CD4-positive, alpha-beta T cell (primary cell): ENCODE measurements at regions of chr3 and their contacts with region 1.

Region 1: GRCh38 chr3:121545574-121546455 is at the start of gene POLQ:
- DNase-seq: peak; percentile 76 to 94 (median 84)
- ATAC-seq: peak; percentile 99
- H3K4me3 ChIP-seq: peak within 1 kb of the TSS; percentile 66
- H3K4me3 Mint-ChIP-seq: peak within 1 kb of the TSS; percentile 85
- H3K27ac ChIP-seq: peak within 1 kb of the TSS; percentile 49 to 59
- H3K27ac Mint-ChIP-seq: peak within 1 kb of the TSS; percentile 82
- H3K4me1 ChIP-seq: peaks cover 8% of the 10 kb centered on the region
- H3K4me1 Mint-ChIP-seq: peaks cover 14% of the 10 kb centered on the region
- H3K27me3 ChIP-seq: no peaks in the 10 kb centered on the region
- H3K27me3 Mint-ChIP-seq: no peaks in the 10 kb centered on the region
- CTCF ChIP-seq: no peak
- total RNA-seq, gene POLQ: 0.17 to 0.30 TPM

Region 2: DNA sequence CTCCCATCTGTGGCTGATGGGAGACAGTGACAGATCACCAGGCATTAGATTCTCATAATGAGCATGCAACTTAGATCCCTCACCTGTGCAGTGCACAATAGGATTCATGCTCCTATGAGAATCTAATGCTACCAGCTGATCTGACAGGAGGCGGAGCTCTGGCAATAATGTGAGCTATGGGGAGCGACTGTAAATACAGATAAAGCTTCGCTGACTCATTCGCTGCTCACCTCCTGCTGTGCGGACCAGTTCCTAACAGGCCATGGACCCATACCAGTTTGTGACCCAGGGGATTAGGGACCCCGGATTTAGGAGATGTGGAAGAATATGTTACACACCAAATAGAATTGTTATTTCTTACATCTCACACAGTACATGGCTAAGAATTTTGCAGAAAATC is 28.6 kb after region 1 on chr3:
- CTCF ChIA-PET with region 1: no interaction called
- POLR2A ChIA-PET with region 1: no interaction called
- intact Hi-C with region 1: no loop called
- DNase-seq: no peak
- ATAC-seq: no peak
- H3K4me3 ChIP-seq: no peak overlapping the region
- H3K4me3 Mint-ChIP-seq: no peak overlapping the region
- H3K27ac ChIP-seq: no peak overlapping the region
- H3K27ac Mint-ChIP-seq: no peak overlapping the region
- H3K4me1 ChIP-seq: no peaks in the 10 kb centered on the region
- H3K4me1 Mint-ChIP-seq: no peaks in the 10 kb centered on the region
- H3K27me3 ChIP-seq: no peaks in the 10 kb centered on the region
- H3K27me3 Mint-ChIP-seq: no peaks in the 10 kb centered on the region
- CTCF ChIP-seq: no peak

Region 3: DNA sequence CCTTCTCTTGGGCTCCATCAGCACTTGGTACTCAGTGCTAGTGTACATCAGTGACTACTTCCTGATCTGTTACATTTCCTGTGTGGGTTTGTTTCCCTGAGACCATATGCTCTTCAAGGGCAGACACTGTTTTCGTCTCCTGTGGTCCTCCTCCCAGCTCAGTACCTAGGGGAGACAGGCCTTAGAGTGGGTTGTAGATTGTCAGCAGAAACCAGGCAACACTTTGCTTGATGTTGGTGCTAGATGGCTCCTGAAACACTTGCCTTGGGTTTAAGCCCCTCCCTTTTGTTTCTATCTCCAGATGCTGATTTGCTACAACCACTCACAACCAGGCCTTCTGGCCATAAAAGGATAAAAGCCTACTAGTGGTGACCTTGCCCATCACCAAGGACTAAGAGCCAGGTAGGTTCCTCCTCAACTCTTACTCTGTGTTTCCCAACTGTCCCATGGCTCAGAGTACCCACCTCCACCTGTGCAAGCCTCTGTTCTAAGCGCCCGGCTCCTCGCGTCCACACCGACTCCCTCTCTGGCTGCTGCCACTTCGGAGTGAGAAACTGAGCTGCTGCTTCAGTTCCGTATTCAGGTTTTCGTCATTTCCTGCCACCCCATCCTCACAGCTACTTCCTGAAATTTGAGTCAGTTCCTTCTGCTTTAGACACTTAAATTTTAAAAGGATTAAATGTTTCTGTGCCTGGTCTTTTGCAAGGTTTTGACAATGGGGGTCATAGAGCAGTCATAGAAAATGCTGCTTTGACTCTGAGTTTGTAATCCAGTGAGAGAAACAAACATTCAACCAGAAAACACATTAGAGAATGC is 114.7 kb after region 1 on chr3 and contains the start of gene HCLS1:
- CTCF ChIA-PET with region 1: interaction called, 3 read pairs
- POLR2A ChIA-PET with region 1: interaction called, 10 read pairs
- intact Hi-C with region 1: loop called (anchors 5 to 10 kb)
- DNase-seq: peak; percentile 46 to 89 (median 62)
- ATAC-seq: peak; percentile 83
- H3K4me3 ChIP-seq: peak within 1 kb of the TSS; percentile 61
- H3K4me3 Mint-ChIP-seq: peak within 1 kb of the TSS; percentile 94
- H3K27ac ChIP-seq: peak within 1 kb of the TSS; percentile 83 to 97
- H3K27ac Mint-ChIP-seq: peak within 1 kb of the TSS; percentile 96
- H3K4me1 ChIP-seq: peaks cover 48% of the 10 kb centered on the region
- H3K4me1 Mint-ChIP-seq: peaks cover 55% of the 10 kb centered on the region
- H3K27me3 ChIP-seq: no peaks in the 10 kb centered on the region
- H3K27me3 Mint-ChIP-seq: no peaks in the 10 kb centered on the region
- CTCF ChIP-seq: no peak
- total RNA-seq, gene HCLS1: 204 to 206 TPM

Region 4: GRCh38 chr3:122094705-122095104 is 548.9 kb after region 1 on chr3:
- CTCF ChIA-PET with region 1: no interaction called
- POLR2A ChIA-PET with region 1: no interaction called
- intact Hi-C with region 1: loop called in 1 of 2 experiments (anchors 5 kb)
- DNase-seq: no peak
- ATAC-seq: no peak
- H3K4me3 ChIP-seq: no peak overlapping the region
- H3K4me3 Mint-ChIP-seq: no peak overlapping the region
- H3K27ac ChIP-seq: no peak overlapping the region
- H3K27ac Mint-ChIP-seq: no peak overlapping the region
- H3K4me1 ChIP-seq: peaks cover 6% of the 10 kb centered on the region
- H3K4me1 Mint-ChIP-seq: no peaks in the 10 kb centered on the region
- H3K27me3 ChIP-seq: no peaks in the 10 kb centered on the region
- H3K27me3 Mint-ChIP-seq: no peaks in the 10 kb centered on the region
- CTCF ChIP-seq: no peak

Region 5: GRCh38 chr3:122383771-122384697 is 838.2 kb after region 1 on chr3 and contains the start of gene FAM162A:
- CTCF ChIA-PET with region 1: interaction called, 7 read pairs
- POLR2A ChIA-PET with region 1: interaction called, 6 read pairs
- intact Hi-C with region 1: loop called (anchors 1 to 5 kb)
- DNase-seq: peak; percentile 87 to 98 (median 92)
- ATAC-seq: peak; percentile 94
- H3K4me3 ChIP-seq: peak within 1 kb of the TSS; percentile 76
- H3K4me3 Mint-ChIP-seq: peak within 1 kb of the TSS; percentile 94
- H3K27ac ChIP-seq: peak within 1 kb of the TSS; percentile 61 to 71
- H3K27ac Mint-ChIP-seq: peak within 1 kb of the TSS; percentile 87
- H3K4me1 ChIP-seq: peaks cover 17% of the 10 kb centered on the region
- H3K4me1 Mint-ChIP-seq: peaks cover 54% of the 10 kb centered on the region
- H3K27me3 ChIP-seq: no peaks in the 10 kb centered on the region
- H3K27me3 Mint-ChIP-seq: no peaks in the 10 kb centered on the region
- CTCF ChIP-seq: peak; percentile 71
- total RNA-seq, gene FAM162A: 32.8 to 34.6 TPM

Region 6: GRCh38 chr3:123028233-123028828 is 1482.5 kb after region 1 on chr3:
- CTCF ChIA-PET with region 1: no interaction called
- POLR2A ChIA-PET with region 1: no interaction called
- intact Hi-C with region 1: loop called (anchors 2 to 5 kb)
- DNase-seq: peak in 5 of 14 experiments; percentile 5 to 55 (median 46)
- ATAC-seq: peak; percentile 34
- H3K4me3 ChIP-seq: peak overlapping the region; percentile 58
- H3K4me3 Mint-ChIP-seq: peak overlapping the region; percentile 81
- H3K27ac ChIP-seq: no peak overlapping the region
- H3K27ac Mint-ChIP-seq: no peak overlapping the region
- H3K4me1 ChIP-seq: peaks cover 24% of the 10 kb centered on the region
- H3K4me1 Mint-ChIP-seq: peaks cover 12% of the 10 kb centered on the region
- H3K27me3 ChIP-seq: peaks cover 79 to 89% of the 10 kb centered on the region in 2 experiments
- H3K27me3 Mint-ChIP-seq: peaks cover 60% of the 10 kb centered on the region
- CTCF ChIP-seq: peak; percentile 43

Region 7: DNA sequence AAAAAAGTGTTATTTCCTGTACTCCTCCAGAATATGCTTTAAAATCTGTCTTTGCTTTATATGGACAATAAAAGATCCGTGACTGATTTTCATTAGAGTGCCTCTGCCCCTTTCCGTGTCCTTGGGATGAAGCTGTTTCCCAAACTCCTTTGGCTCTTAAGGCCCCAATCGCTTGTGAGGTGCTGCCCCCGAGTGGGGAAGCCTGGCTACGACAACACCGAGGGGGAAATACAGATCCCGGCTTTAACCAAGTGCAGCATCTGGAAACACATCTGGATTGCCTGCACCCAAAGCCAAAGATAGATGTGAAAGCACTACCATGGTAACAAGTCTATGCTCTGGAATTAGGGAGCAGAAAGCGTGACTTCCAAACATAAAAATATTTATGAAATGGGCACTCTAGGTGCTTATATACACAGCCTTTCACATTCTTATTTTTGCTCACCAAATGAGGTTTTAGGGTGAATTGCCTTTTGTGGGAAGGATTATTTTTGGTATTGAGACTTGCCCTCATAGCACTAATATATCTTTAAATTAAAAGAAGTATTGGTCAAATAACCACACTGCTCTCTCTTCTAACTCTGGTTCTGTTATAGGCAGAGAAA is 1943.7 kb after region 1 on chr3:
- CTCF ChIA-PET with region 1: no interaction called
- POLR2A ChIA-PET with region 1: no interaction called
- intact Hi-C with region 1: loop called (anchors 5 kb)
- DNase-seq: peak in 13 of 14 experiments; percentile 5 to 49 (median 17)
- ATAC-seq: no peak
- H3K4me3 ChIP-seq: no peak overlapping the region
- H3K4me3 Mint-ChIP-seq: no peak overlapping the region
- H3K27ac ChIP-seq: no peak overlapping the region
- H3K27ac Mint-ChIP-seq: no peak overlapping the region
- H3K4me1 ChIP-seq: no peaks in the 10 kb centered on the region
- H3K4me1 Mint-ChIP-seq: no peaks in the 10 kb centered on the region
- H3K27me3 ChIP-seq: no peaks in the 10 kb centered on the region
- H3K27me3 Mint-ChIP-seq: no peaks in the 10 kb centered on the region
- CTCF ChIP-seq: peak; percentile 70